GM13977 (cell line): ENCODE measurements at regions of chr12 and their contacts with region 1.

Region 1: GRCh38 chr12:64392221-64392620 is 1.7 kb upstream of the C12orf56 start:
- DNase-seq: peak; percentile 61
- CTCF ChIP-seq: peak; percentile 30

Region 2: DNA sequence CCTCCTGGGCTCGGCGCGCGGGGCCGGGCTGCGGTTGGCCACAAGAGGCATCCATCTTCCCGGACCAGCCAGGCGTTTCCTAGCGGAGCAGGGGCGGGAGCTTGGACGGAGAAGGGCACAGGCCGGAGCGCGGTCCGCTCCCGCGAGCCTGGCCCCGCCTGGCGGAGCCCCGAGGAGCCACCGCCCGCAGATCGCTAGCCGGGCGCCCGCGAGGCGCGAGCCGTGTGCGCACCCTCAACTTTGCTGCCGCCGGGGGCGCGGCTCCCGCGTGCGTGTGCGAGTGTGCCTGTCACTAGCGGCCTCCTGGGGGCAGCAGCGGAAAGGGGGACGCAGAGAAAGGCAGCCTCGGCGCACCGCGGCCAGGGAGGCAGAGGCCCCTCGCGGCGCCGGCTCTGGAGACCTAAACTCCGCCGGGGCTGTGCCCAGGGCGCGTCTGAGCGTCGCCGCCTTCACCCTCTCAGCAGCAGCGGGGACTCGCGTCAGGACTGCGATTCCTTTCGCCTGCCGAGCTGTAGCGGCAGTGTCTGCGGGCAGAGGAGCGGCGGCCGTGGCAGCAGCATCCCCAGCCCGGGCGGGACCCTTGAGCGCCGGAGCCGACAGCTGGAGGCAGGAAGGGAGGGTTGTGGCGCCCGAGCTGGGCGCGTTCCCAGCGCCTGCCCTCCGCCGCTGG is 548.4 kb before region 1 on chr12:
- in situ Hi-C with region 1: loop called (anchors 25 kb)
- DNase-seq: peak; percentile 94
- CTCF ChIP-seq: peak; percentile 97

Region 3: GRCh38 chr12:63978519-63978918 is 413.7 kb before region 1 on chr12:
- in situ Hi-C with region 1: no loop called
- DNase-seq: no peak
- CTCF ChIP-seq: no peak

Region 4: GRCh38 chr12:64273527-64274403 is 118.5 kb before region 1 on chr12:
- in situ Hi-C with region 1: no loop called
- DNase-seq: no peak
- CTCF ChIP-seq: peak; percentile 41

Region 5: DNA sequence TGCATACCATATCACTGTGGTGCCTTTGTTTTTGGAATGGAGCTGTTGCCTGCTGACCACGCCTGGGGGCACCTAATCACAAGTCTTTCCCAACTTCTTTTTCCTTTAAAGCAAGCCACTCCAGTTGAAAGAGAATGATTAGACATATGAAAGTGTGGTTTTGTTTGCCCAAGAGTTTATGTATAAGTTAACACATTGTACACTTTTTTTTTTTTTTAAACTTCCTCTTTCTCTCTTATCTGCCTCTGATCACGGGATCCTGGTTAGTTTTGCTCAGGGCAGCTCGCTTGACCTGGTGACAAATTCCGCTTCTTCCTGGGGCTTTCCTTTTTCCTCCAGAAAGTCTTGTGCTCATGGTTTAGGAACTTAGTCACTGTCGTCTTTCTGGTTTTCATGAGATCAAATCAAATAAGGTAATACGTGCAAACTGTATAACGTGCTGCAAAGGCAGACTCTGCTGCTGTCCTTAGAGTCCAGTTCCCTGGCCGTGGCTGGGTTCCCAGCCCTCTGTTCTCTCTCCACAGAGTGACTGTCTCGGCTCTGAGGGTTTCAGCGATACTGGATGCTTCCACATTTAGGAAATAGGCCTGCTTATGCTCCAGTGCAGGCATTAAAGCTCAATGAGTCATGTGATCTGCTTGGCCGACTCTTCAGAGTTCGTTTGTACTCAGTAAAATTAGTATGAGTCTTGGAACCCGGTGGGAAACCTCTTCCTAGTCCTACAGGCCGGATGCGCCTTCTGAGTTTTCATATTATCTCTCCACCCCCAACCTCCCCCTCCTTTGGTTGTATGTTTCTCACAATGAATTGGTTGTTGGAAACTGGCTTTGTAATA is 233.2 kb after region 1 on chr12:
- in situ Hi-C with region 1: no loop called
- DNase-seq: no peak
- CTCF ChIP-seq: peak; percentile 12